ENCODE measurements at regions of chr10 and their contacts with region 1.

Region 1: DNA sequence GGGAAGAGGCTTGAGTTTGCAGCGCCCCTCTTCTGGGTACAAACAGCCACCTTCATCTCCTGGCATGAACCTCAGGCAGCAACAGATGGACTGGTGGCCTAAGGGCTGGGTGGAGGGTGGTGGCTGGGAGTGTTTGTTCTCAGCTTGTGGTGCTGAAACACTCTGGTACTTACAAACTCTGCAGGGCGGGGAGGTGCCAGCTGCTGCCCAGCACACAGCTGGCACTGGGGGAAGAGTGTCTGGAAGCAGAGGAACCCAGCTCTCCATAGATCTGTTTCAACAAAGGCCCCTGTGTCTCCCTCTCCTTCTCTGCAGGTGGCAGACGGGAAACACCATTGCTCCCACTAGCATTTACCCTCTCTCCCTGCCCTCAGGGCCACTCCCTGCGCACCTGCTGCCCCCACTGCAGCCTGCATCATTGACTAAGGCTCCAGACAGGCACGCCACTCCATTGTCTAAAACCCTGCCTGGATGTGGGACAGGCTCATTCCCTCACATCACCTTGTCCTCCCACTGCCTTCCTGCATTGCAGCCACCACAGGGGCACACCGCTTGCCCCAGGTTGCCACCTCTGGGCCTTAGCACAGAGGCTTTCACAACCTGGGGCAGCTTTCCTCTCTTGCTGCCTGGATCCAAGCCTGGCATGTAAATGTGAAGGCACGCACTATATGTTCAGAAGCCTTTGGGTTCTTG is 6.5 kb downstream of the ARHGAP22 start:
- DNase-seq: no peak
- CTCF ChIP-seq: no peak

Region 2: DNA sequence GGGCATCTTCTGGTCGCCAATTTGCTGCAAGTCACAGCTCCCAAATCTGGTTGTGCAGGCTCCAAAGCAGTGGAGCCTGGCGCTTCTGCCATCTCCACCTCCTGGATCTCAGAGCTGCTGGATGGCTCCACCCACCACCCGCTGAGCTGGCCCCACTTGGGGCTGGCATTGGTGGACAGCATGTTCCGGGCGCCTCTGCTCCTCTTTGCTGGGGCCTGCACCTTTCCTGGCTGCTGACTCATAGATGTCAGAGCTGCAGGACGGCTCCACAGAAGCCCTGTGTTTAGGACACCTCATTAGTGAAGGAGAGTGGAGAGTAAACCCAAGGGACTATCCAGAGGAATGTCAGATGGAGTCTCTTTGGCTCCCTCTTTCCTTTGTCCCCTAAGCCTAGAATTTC is 264.5 kb before region 1 on chr10:
- in situ Hi-C with region 1: no loop called
- DNase-seq: no peak
- CTCF ChIP-seq: no peak

Region 3: DNA sequence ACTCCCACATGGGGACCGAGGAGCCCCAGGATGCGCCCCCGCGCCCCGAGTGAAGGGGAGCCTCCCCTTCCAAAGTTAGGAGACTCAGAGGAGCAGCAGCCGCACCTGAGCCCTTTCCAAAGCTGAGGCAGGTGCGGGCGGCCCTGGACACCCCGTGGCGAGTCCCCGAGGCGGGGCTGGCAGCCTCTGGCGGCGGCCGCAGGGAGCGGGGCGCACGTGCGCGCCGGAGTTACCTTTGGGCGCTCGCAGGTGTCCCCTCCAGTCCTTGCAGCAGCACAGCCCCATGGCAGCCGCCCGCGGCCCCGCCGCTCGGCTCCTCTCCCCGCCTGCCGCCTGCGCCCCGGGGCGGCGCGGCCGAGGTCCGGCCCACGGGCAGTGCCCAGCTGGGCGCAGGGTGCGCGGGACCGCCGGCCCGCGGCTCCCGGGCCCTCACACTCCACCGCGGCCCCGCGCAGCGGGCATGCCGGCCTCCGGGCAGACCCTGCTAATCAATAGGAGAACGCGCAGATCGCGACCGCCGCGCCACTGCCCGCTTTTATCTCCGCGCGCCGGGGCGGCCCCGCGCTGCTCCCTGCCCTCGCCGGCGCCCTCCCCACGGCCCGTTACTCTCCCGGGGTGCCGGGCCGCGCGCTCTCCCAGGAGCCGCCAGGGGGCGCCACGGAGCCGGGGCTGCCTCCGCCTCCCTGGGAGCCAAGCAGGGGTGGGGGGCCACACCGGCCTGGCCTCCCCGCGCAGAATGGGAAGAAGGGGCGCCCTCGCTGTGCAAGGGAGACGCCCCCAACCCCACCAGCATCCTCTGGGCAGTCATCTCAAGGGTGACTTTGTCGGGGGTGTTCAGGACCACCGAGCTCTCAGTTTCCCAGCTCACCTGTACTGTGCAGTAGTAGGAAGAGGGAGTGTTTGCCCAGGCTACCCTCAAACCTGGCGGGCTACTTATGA is 74.3 kb before region 1 on chr10:
- in situ Hi-C with region 1: no loop called
- DNase-seq: peak; percentile 65
- CTCF ChIP-seq: peak; percentile 60

Region 4: GRCh38 chr10:48541144-48541795 is 57.1 kb before region 1 on chr10:
- in situ Hi-C with region 1: loop called (anchors 10 kb)
- DNase-seq: no peak
- CTCF ChIP-seq: no peak

Measured in GM13977 (cell line).